ENCODE measurements at regions of chr22 and their contacts with region 1.

Region 1: GRCh38 chr22:40177738-40178416 is at the start of gene TNRC6B:
- DNase-seq: peak; percentile 91
- H3K4me3 ChIP-seq: peak within 1 kb of the TSS; percentile 74
- CTCF ChIP-seq: no peak

Region 2: DNA sequence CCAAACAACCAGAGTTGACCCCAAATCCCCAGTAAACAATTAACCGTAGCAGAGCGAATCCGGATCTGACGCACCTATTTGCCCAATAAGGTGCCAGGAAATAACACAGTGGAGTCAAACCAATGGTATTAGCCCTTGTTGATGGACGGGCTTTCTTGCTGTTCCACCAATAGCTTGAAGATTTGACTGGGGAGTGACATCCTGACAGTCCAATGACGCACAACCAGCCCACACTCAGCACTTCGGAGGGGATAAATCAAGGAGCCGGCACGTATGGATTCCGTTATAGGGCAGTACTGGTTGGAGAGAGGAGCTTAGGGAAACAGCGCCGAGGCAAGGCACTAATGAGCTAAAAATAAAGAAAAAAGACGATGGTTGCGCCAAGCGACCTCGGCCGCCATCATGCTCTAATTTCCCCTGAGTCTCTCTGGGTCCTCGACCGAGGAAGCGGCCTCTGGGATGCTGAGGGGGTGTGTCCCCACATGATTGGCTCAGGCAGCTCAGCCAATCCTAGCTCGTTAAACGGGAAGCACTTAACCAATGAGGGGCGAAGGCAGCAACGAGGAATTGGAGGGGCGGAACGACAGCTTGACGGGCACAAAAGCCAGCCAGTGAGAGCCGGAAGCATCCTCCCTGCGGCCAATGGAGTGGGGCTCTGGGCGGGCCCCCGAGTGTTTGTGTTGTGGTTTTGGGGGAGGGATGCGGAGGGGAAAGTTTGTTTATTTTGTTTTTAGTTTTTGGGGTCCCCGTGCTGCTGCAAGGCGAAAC is 133.6 kb before region 1 on chr22:
- CTCF ChIA-PET with region 1: no interaction called
- POLR2A ChIA-PET with region 1: interaction called, 14 read pairs
- DNase-seq: peak; percentile 96
- H3K4me3 ChIP-seq: peak overlapping the region; percentile 95
- CTCF ChIP-seq: no peak

Region 3: DNA sequence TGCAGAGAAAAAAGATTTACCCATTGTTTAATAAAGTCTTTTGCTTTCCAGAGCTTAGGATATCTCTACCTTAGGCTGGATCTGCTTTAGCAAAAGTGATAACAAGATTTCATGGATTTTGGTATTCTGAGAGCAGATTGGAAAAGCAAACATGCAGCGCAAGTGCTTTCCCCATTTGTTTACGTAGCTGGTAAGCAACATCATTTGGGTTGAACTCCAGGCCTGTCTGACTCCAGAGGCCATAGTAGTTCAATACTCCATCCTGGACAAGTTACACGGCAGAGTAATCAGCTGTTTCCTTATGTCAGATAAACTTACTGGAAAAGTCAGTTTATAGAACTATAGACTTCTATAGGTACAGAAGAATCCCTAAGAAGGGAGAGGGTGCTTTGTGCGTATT is 40.7 kb before region 1 on chr22:
- CTCF ChIA-PET with region 1: no interaction called
- POLR2A ChIA-PET with region 1: no interaction called
- DNase-seq: no peak
- H3K4me3 ChIP-seq: no peak overlapping the region
- CTCF ChIP-seq: no peak

Region 4: GRCh38 chr22:40326905-40327735 is 149.2 kb after region 1 on chr22:
- CTCF ChIA-PET with region 1: no interaction called
- POLR2A ChIA-PET with region 1: no interaction called
- DNase-seq: no peak
- H3K4me3 ChIP-seq: no peak overlapping the region
- CTCF ChIP-seq: no peak